Activated T-helper 1 cell treated with anti-CD3 and anti-CD28 coated beads, Interleukin-12 subunit alpha, Interleukin-12 subunit beta, Interleukin-2, Interleukin-4 antibody, amounts not matched to agents 30 ng/mL and 10 ng/mL and 1 ng/mL, durations not matched to agents 14 hours and 24 hours and 36 hours (primary cell): ENCODE measurements at regions of chr16 and their contacts with region 1.

Region 1: GRCh38 chr16:527006-527753 is at the start of gene CAPN15:
- DNase-seq: peak; percentile 84
- H3K4me3 Mint-ChIP-seq: peak within 1 kb of the TSS; percentile 95
- H3K27ac Mint-ChIP-seq: peak within 1 kb of the TSS; percentile 94
- H3K4me1 Mint-ChIP-seq: peaks cover 9% of the 10 kb centered on the region
- H3K27me3 Mint-ChIP-seq: no peaks in the 10 kb centered on the region
- total RNA-seq, gene CAPN15: 122 and 124 TPM in 2 replicates

Region 2: GRCh38 chr16:234468-235305 is 292.5 kb before region 1 on chr16 and contains the start of gene FAM234A:
- intact Hi-C with region 1: loop called (anchors 2 kb)
- DNase-seq: peak; percentile 92
- H3K4me3 Mint-ChIP-seq: peak within 1 kb of the TSS; percentile 96
- H3K27ac Mint-ChIP-seq: peak within 1 kb of the TSS; percentile 98
- H3K4me1 Mint-ChIP-seq: peaks cover 14% of the 10 kb centered on the region
- H3K27me3 Mint-ChIP-seq: peaks cover 6% of the 10 kb centered on the region
- total RNA-seq, gene FAM234A: 18.0 and 21.2 TPM in 2 replicates

Region 3: DNA sequence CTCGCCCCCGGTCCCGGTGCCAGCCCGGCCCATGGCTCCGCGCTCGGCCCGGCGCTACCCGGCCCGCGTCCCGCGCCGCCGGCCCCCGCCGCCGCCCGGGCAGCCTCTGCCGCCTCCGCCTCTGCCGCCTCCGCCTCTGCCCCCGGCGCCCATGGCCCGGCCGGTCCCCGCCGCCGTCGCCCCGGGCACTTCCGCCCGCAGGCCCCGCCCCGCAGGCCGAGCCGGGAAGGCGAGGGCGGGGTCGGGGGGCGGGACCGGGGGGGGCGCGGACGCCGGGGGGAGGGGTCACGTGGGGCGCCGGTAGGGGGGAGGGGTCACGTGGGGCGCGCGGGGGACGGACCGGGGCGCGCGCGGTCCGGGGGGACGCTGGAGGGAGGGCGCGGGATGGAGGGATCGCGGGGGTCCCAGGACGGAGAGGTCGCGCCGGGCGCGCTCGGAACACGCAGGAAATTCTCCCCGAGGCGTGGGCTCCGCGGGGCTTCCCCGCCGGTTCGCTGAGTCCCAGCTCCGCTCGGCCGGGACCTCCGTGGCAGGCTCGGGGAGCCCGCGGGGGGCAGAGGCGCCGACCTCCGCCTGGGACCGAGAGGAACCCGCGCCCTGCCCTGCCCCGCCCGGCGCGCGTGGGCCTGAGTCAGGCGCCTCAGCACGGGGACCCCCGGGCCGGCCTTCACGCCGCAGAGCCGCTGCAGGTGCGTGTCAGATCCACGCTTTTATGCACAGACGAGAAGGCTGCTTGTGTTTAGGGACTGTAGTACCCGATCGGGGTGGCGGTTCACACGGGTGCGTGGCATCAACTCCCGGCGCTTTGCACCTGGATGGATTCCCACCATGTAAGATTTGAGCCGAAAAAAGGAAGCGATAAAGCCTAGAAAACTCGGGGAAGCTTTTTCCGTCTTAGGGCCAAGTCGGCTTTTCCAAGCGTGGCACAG is 145.1 kb before region 1 on chr16 and contains the start of gene PGAP6:
- intact Hi-C with region 1: loop called (anchors 5 kb)
- DNase-seq: peak; percentile 55
- H3K4me3 Mint-ChIP-seq: peak within 1 kb of the TSS; percentile 82
- H3K27ac Mint-ChIP-seq: peak within 1 kb of the TSS; percentile 58
- H3K4me1 Mint-ChIP-seq: peaks cover 7% of the 10 kb centered on the region
- H3K27me3 Mint-ChIP-seq: peaks cover 14% of the 10 kb centered on the region
- total RNA-seq, gene PGAP6: 35.7 and 36.3 TPM in 2 replicates

Region 4: DNA sequence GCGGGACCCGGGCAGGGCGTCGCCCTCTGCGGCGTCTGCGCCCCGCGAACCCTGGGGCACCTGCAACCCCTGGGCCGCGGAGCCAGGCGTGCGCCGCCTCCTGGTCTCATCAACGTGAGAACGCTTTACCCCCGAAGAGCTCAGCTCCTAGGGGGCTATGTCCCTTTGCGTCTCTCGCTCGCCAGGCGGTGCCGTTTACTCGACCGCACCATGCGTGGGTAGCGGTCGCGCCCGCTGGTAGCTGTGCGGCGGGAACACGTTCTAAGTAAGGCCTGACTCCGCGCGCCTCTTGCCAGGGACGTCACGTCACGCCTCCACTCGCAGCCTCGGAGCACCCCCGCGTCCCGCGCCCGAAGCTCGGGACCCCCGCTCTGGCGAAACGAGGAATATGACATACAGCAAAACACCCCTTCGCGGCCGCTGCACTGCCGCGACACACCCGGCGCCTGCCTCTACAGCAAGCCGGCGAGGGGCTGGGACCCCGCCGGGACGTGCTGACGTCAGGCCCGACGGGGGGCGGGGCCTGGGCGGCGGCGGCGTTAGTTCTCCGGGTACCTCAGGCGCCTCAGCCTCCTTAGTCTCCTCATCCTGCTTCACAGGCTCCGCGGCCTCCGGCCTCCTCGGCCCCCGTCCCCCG is 102.0 kb before region 1 on chr16 and contains the start of gene RAB11FIP3:
- intact Hi-C with region 1: loop called (anchors 1 kb)
- DNase-seq: peak; percentile 83
- H3K4me3 Mint-ChIP-seq: peak within 1 kb of the TSS; percentile 84
- H3K27ac Mint-ChIP-seq: peak within 1 kb of the TSS; percentile 88
- H3K4me1 Mint-ChIP-seq: peaks cover 32% of the 10 kb centered on the region
- H3K27me3 Mint-ChIP-seq: peaks cover 16% of the 10 kb centered on the region
- total RNA-seq, gene RAB11FIP3: 41.4 and 47.5 TPM in 2 replicates

Region 5: GRCh38 chr16:589658-590159 is 62.5 kb after region 1 on chr16 and contains the start of gene RAB40C:
- intact Hi-C with region 1: loop called (anchors 1 kb)
- DNase-seq: peak; percentile 97
- H3K4me3 Mint-ChIP-seq: peak within 1 kb of the TSS; percentile 97
- H3K27ac Mint-ChIP-seq: peak within 1 kb of the TSS; percentile 100
- H3K4me1 Mint-ChIP-seq: peaks cover 26% of the 10 kb centered on the region
- H3K27me3 Mint-ChIP-seq: no peaks in the 10 kb centered on the region
- total RNA-seq, gene RAB40C: 14.0 and 15.2 TPM in 2 replicates

Region 6: GRCh38 chr16:658679-659571 is 131.7 kb after region 1 on chr16:
- intact Hi-C with region 1: no loop called
- DNase-seq: no peak
- H3K4me3 Mint-ChIP-seq: no peak overlapping the region
- H3K27ac Mint-ChIP-seq: no peak overlapping the region
- H3K4me1 Mint-ChIP-seq: no peaks in the 10 kb centered on the region
- H3K27me3 Mint-ChIP-seq: no peaks in the 10 kb centered on the region

Region 7: GRCh38 chr16:1308977-1309885 is 782.1 kb after region 1 on chr16 and contains the start of gene UBE2I:
- intact Hi-C with region 1: loop called (anchors 2 kb)
- DNase-seq: peak; percentile 98
- H3K4me3 Mint-ChIP-seq: peak within 1 kb of the TSS; percentile 95
- H3K27ac Mint-ChIP-seq: peak within 1 kb of the TSS; percentile 100
- H3K4me1 Mint-ChIP-seq: peaks cover 20% of the 10 kb centered on the region
- H3K27me3 Mint-ChIP-seq: peaks cover 2% of the 10 kb centered on the region
- total RNA-seq, gene UBE2I: 257 TPM in 2 replicates